Activated naive CD4-positive, alpha-beta T cell treated with anti-CD3 and anti-CD28 coated beads for 36 hours (primary cell): ENCODE measurements at regions of chr12 and their contacts with region 1.

Region 1: DNA sequence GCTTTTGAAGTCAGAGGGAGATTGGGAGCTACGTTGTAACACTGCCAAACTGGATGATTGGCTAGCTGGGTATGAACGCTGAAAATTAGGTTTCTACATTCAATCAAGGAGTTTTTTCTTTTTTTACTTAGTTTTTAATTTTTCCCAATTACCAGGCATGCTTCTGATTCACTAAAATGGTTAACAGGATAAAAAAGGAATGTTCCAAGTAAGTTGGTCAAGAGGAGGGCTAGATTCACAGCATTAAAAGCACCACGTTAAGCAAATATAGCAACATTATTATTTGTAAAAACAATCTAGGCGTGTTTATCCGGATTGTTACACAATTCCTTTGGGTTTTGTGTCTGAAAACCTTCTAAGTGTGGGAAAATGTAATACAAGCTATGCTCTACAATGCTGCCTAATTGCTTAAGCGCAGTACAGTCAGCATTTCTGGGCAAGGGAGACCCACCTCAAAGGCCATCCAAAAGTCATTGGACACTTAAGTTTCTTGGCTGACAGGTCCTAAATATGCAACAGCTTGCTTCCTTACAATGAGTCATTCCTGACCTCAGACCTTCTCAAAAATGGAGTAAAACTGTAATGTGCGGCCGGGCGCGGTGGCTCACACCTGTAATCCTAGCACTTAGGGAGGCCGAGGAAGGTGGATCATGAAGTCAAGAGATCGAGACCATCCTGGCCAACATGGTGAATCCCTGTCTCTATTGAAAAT is 1.2 kb downstream of the RPLP0 start:
- DNase-seq: peak; percentile 51
- H3K4me3 Mint-ChIP-seq: peak overlapping the region; percentile 93
- H3K27ac Mint-ChIP-seq: peak overlapping the region; percentile 99
- H3K4me1 Mint-ChIP-seq: peaks cover 42% of the 10 kb centered on the region
- H3K27me3 Mint-ChIP-seq: no peaks in the 10 kb centered on the region

Region 2: DNA sequence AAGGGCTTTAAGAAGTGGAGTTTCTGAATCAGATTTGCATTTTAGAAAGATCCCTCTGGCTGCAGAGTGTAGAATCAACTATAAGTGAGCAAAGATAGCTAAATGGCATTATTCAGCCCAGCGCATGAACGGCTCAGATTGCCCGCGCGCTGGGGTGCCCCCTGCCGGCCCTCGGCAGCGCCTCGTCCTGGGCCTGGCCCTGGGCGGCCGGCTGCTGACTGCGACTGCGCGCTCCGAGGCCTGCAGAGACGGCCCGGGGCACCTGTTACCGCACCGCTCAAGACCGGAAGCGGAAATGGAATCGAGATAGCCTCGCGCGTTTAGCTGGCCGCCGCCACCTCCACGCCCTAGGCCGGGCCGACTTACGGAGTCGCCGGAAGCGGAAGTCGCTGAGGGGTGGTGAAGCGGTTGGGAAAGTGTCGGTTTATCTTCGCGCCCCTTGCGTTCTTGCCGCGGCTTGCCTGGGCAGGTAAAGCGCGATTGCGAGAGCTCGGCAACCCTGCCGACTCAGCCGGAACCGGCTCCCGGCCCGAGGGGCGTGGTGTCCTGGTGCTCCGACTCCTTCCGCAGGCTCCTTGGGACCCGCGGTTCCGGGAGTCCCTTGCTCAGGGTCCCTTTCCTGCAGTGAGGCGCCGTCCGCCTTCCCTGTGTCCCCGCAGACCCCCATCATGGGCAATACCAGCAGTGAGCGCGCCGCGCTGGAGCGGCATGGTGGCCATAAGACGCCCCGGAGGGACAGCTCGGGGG is 532.0 kb before region 1 on chr12 and contains the start of gene PRKAB1:
- CTCF ChIA-PET with region 1: no interaction called
- intact Hi-C with region 1: loop called (anchors 5 kb)
- DNase-seq: peak; percentile 96
- H3K4me3 Mint-ChIP-seq: peak within 1 kb of the TSS; percentile 90
- H3K27ac Mint-ChIP-seq: peak within 1 kb of the TSS; percentile 95
- H3K4me1 Mint-ChIP-seq: peaks cover 52% of the 10 kb centered on the region
- H3K27me3 Mint-ChIP-seq: no peaks in the 10 kb centered on the region
- total RNA-seq, gene PRKAB1: 34.3 to 39.8 TPM

Region 3: GRCh38 chr12:119988782-119989668 is 210.7 kb before region 1 on chr12 and contains the start of gene BICDL1:
- CTCF ChIA-PET with region 1: interaction called, 4 read pairs
- intact Hi-C with region 1: loop called (anchors 1 kb)
- DNase-seq: peak; percentile 97
- H3K4me3 Mint-ChIP-seq: peak within 1 kb of the TSS; percentile 91
- H3K27ac Mint-ChIP-seq: peak within 1 kb of the TSS; percentile 93
- H3K4me1 Mint-ChIP-seq: peaks cover 45% of the 10 kb centered on the region
- H3K27me3 Mint-ChIP-seq: no peaks in the 10 kb centered on the region
- total RNA-seq, gene BICDL1: 128 to 133 TPM

Region 4: GRCh38 chr12:120150919-120151525 is 48.7 kb before region 1 on chr12:
- CTCF ChIA-PET with region 1: no interaction called
- intact Hi-C with region 1: no loop called
- DNase-seq: no peak
- H3K4me3 Mint-ChIP-seq: no peak overlapping the region
- H3K27ac Mint-ChIP-seq: no peak overlapping the region
- H3K4me1 Mint-ChIP-seq: no peaks in the 10 kb centered on the region
- H3K27me3 Mint-ChIP-seq: no peaks in the 10 kb centered on the region

Region 5: GRCh38 chr12:120249875-120250795 is 50.4 kb after region 1 on chr12:
- CTCF ChIA-PET with region 1: interaction called, 7 read pairs
- intact Hi-C with region 1: loop called (anchors 1 kb)
- DNase-seq: peak; percentile 69
- H3K4me3 Mint-ChIP-seq: peak overlapping the region; percentile 41
- H3K27ac Mint-ChIP-seq: peak overlapping the region; percentile 84
- H3K4me1 Mint-ChIP-seq: peaks cover 80% of the 10 kb centered on the region
- H3K27me3 Mint-ChIP-seq: no peaks in the 10 kb centered on the region

Region 6: GRCh38 chr12:120292661-120293531 is 93.1 kb after region 1 on chr12 and contains the start of gene RNU4-1:
- CTCF ChIA-PET with region 1: interaction called, 5 read pairs
- intact Hi-C with region 1: loop called (anchors 1 kb)
- DNase-seq: peak; percentile 88
- H3K4me3 Mint-ChIP-seq: no peak within 1 kb of the TSS
- H3K27ac Mint-ChIP-seq: no peak within 1 kb of the TSS
- H3K4me1 Mint-ChIP-seq: peaks cover 6% of the 10 kb centered on the region
- H3K27me3 Mint-ChIP-seq: no peaks in the 10 kb centered on the region
- total RNA-seq, gene RNU4-1: 685 to 1,294 TPM

Region 7: DNA sequence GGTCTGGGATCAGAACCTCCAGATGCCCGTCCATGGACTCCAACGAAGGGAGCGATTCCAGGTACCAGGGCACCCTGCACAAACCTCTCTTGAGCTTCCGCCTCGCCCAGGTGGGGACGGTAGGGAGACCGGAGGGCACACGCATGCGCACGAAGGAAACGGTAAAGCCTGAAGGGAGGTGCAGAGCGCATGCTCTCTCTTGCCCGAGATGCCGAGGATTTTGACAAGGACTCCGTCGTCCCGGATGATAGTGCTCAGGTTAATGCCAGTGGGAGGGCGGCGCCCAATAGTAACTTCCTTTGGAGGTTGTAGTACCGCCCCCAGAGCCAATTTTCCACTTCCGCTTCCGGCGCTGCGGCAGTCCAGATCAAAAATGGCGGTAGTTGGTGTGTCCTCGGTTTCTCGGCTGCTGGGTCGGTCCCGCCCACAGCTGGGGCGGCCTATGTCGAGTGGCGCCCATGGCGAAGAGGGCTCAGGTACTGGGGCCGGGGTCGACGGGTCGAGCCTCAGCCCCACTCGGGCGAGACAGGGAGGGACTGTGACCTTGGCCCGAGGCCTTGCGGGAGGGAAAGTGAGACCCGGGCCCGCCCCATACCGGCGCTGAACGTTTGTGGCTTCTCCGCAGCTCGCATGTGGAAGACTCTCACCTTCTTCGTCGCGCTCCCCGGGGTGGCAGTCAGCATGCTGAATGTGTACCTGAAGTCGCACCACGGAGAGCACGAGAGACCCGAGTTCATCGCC is 238.2 kb after region 1 on chr12 and contains the start of gene COX6A1:
- CTCF ChIA-PET with region 1: interaction called, 4 read pairs
- intact Hi-C with region 1: loop called (anchors 1 kb)
- DNase-seq: peak; percentile 99
- H3K4me3 Mint-ChIP-seq: peak within 1 kb of the TSS; percentile 92
- H3K27ac Mint-ChIP-seq: peak within 1 kb of the TSS; percentile 93
- H3K4me1 Mint-ChIP-seq: peaks cover 22% of the 10 kb centered on the region
- H3K27me3 Mint-ChIP-seq: no peaks in the 10 kb centered on the region
- total RNA-seq, gene COX6A1: 536 to 540 TPM